ENCODE measurements at regions of chr6 and their contacts with region 1.

Region 1: DNA sequence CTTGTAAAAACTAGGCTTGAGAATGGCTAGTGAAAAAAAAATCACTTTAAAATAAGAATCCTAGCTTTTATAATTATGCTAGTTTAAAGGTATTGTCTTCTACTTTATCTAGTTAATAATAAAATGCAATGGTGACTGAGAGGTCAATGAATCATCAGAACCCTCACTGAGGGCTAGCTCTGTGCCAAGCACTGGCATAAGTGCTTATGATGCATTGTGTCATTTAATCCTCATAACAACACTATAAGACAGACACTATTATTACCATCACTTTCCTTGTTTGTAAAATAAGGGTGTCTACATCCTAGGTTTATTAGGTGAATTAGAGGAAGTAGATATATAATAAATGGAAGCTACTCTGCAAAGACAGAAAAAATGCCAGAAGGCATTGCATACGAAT is 144.3 kb downstream of the F13A1 start:
- DNase-seq: no peak
- H3K4me3 ChIP-seq: no peak overlapping the region
- H3K27ac ChIP-seq: no peak overlapping the region
- H3K4me1 ChIP-seq: no peaks in the 10 kb centered on the region
- CTCF ChIP-seq: no peak

Region 2: DNA sequence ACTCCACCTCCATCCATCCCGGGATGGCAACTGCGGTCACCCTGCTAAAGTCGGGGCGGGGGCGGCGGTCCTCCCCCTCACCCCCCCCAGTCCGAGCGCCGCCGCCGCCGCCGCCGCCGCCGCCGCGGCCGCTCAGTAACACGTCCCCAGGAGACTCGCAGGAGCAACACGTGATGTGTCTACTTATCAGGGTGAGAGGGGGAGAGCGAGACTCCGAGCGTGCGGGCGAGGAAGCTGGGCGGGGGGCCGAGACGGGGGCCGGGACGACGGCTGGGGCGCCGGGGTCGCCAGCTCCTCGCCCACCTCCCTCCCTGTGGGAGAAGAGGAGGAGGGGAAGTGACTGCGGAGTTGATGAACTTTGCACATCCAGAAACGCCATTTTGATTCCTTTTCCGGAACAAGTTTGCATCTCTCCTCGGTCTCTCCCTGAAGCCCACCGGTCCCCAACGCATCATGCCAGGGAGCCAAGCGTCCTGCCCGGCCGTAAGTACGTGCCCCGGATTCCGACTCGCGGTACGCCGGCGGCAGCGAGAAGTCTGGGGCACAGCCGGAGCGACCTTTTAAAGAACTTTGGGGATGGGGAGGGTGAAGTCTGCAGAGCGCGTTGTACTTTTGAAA is 931.6 kb after region 1 on chr6 and contains the start of gene RREB1:
- CTCF ChIA-PET with region 1: interaction called, 10 read pairs
- POLR2A ChIA-PET with region 1: no interaction called
- intact Hi-C with region 1: no loop called
- DNase-seq: peak; percentile 68
- H3K4me3 ChIP-seq: peak within 1 kb of the TSS; percentile 87
- H3K27ac ChIP-seq: no peak within 1 kb of the TSS
- H3K4me1 ChIP-seq: peaks cover 17% of the 10 kb centered on the region
- CTCF ChIP-seq: no peak
- total RNA-seq, gene RREB1: 3.4 and 4.4 TPM in 2 replicates